ENCODE measurements at regions of chr11 and their contacts with region 1.

Region 1: GRCh38 chr11:119334174-119334930 is at the start of gene RNF26:
- DNase-seq: peak; percentile 94
- ATAC-seq: peak; percentile 85
- H3K4me3 ChIP-seq: peak within 1 kb of the TSS; percentile 84 to 95
- H3K27ac ChIP-seq: peak within 1 kb of the TSS; percentile 98
- H3K4me1 ChIP-seq: peaks cover 40% of the 10 kb centered on the region
- H3K27me3 ChIP-seq: no peaks in the 10 kb centered on the region
- CTCF ChIP-seq: no peak
- total RNA-seq, gene RNF26: 69.0 TPM

Region 2: GRCh38 chr11:119030329-119031049 is 303.9 kb before region 1 on chr11 and contains the start of gene SLC37A4:
- CTCF ChIA-PET with region 1: interaction called, 6 read pairs
- POLR2A ChIA-PET with region 1: interaction called, 10 read pairs
- in situ Hi-C with region 1: no loop called
- intact Hi-C with region 1: no loop called
- DNase-seq: peak; percentile 93
- ATAC-seq: peak; percentile 92
- H3K4me3 ChIP-seq: peak within 1 kb of the TSS; percentile 75 to 90
- H3K27ac ChIP-seq: peak within 1 kb of the TSS; percentile 79
- H3K4me1 ChIP-seq: peaks cover 13% of the 10 kb centered on the region
- H3K27me3 ChIP-seq: no peaks in the 10 kb centered on the region
- CTCF ChIP-seq: peak; percentile 99; the same call in 1 of the 2 replicates
- total RNA-seq, gene SLC37A4: 33.2 TPM

Region 3: GRCh38 chr11:119095066-119095880 is 239.1 kb before region 1 on chr11:
- CTCF ChIA-PET with region 1: interaction called, 10 read pairs
- POLR2A ChIA-PET with region 1: no interaction called
- in situ Hi-C with region 1: no loop called
- intact Hi-C with region 1: no loop called
- DNase-seq: peak; percentile 99
- ATAC-seq: peak; percentile 90
- H3K4me3 ChIP-seq: peak overlapping the region; percentile 81 to 94
- H3K27ac ChIP-seq: peak overlapping the region; percentile 94
- H3K4me1 ChIP-seq: peaks cover 23% of the 10 kb centered on the region
- H3K27me3 ChIP-seq: no peaks in the 10 kb centered on the region
- CTCF ChIP-seq: peak; percentile 65

Region 4: GRCh38 chr11:119205574-119206510 is 128.5 kb before region 1 on chr11 and contains the start of gene CBL:
- CTCF ChIA-PET with region 1: interaction called, 13 read pairs
- POLR2A ChIA-PET with region 1: interaction called, 13 read pairs
- in situ Hi-C with region 1: no loop called
- intact Hi-C with region 1: no loop called
- DNase-seq: peak; percentile 81
- ATAC-seq: peak; percentile 95
- H3K4me3 ChIP-seq: peak within 1 kb of the TSS; percentile 80 to 96
- H3K27ac ChIP-seq: peak within 1 kb of the TSS; percentile 95
- H3K4me1 ChIP-seq: peaks cover 32% of the 10 kb centered on the region
- H3K27me3 ChIP-seq: no peaks in the 10 kb centered on the region
- CTCF ChIP-seq: peak; percentile 99
- total RNA-seq, gene CBL: 69.9 TPM

Region 5: GRCh38 chr11:119229288-119229672 is 105.1 kb before region 1 on chr11:
- CTCF ChIA-PET with region 1: no interaction called
- POLR2A ChIA-PET with region 1: no interaction called
- in situ Hi-C with region 1: no loop called
- intact Hi-C with region 1: no loop called
- DNase-seq: no peak
- ATAC-seq: no peak
- H3K4me3 ChIP-seq: no peak overlapping the region
- H3K27ac ChIP-seq: no peak overlapping the region
- H3K4me1 ChIP-seq: no peaks in the 10 kb centered on the region
- H3K27me3 ChIP-seq: no peaks in the 10 kb centered on the region
- CTCF ChIP-seq: no peak

Region 6: GRCh38 chr11:119373921-119374631 is 39.7 kb after region 1 on chr11:
- CTCF ChIA-PET with region 1: interaction called, 22 read pairs
- POLR2A ChIA-PET with region 1: no interaction called
- in situ Hi-C with region 1: no loop called
- intact Hi-C with region 1: loop called (anchors 5 kb)
- DNase-seq: peak; percentile 55
- ATAC-seq: peak; percentile 83
- H3K4me3 ChIP-seq: no peak overlapping the region
- H3K27ac ChIP-seq: no peak overlapping the region
- H3K4me1 ChIP-seq: peaks cover 13% of the 10 kb centered on the region
- H3K27me3 ChIP-seq: no peaks in the 10 kb centered on the region
- CTCF ChIP-seq: peak; percentile 98

Region 7: GRCh38 chr11:119468511-119468910 is 134.2 kb after region 1 on chr11:
- CTCF ChIA-PET with region 1: no interaction called
- POLR2A ChIA-PET with region 1: no interaction called
- in situ Hi-C with region 1: no loop called
- intact Hi-C with region 1: no loop called
- DNase-seq: no peak
- ATAC-seq: no peak
- H3K4me3 ChIP-seq: no peak overlapping the region
- H3K27ac ChIP-seq: no peak overlapping the region
- H3K4me1 ChIP-seq: no peaks in the 10 kb centered on the region
- H3K27me3 ChIP-seq: no peaks in the 10 kb centered on the region
- CTCF ChIP-seq: no peak

Measured in Panc1 (cell line).